Panc1 (cell line): ENCODE measurements at regions of chr2 and their contacts with region 1.

Region 1: GRCh38 chr2:170689481-170689880 is 25.7 kb upstream of the SP5 start:
- DNase-seq: no peak
- ATAC-seq: no peak
- H3K4me3 ChIP-seq: no peak overlapping the region
- H3K27ac ChIP-seq: no peak overlapping the region
- H3K4me1 ChIP-seq: no peaks in the 10 kb centered on the region
- H3K27me3 ChIP-seq: no peaks in the 10 kb centered on the region
- CTCF ChIP-seq: no peak

Region 2: DNA sequence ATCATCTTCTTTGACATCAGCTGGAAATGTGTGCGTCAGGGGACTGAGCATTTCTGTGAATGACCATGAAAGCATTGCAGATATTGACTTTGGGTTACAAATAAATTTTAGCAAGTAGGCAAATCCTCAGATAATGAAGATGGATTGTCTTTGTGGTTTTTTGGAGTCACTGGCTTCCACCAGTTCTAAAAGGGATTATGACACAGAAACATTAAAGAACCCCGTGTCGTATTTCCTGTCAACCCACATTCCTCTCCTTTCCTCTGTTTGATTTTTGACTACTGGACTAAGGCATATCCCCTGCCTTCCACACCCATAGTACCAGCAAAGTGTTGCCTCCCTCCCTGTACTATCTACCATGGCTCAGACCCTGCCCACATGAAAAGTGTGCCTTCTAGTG is 243.4 kb before region 1 on chr2:
- CTCF ChIA-PET with region 1: interaction called, 12 read pairs
- POLR2A ChIA-PET with region 1: no interaction called
- in situ Hi-C with region 1: no loop called
- intact Hi-C with region 1: no loop called
- DNase-seq: no peak
- ATAC-seq: no peak
- H3K4me3 ChIP-seq: no peak overlapping the region
- H3K27ac ChIP-seq: no peak overlapping the region
- H3K4me1 ChIP-seq: no peaks in the 10 kb centered on the region
- H3K27me3 ChIP-seq: no peaks in the 10 kb centered on the region; the same call in 1 of the 2 replicates
- CTCF ChIP-seq: no peak

Region 3: GRCh38 chr2:170713543-170714380 is 24.3 kb after region 1 on chr2:
- CTCF ChIA-PET with region 1: no interaction called
- POLR2A ChIA-PET with region 1: no interaction called
- in situ Hi-C with region 1: no loop called
- intact Hi-C with region 1: no loop called
- DNase-seq: no peak
- ATAC-seq: peak; percentile 29; the same call in 1 of the 2 replicates
- H3K4me3 ChIP-seq: peak overlapping the region; percentile 46 to 51
- H3K27ac ChIP-seq: no peak overlapping the region
- H3K4me1 ChIP-seq: peaks cover 12% of the 10 kb centered on the region
- H3K27me3 ChIP-seq: peaks cover 11% of the 10 kb centered on the region
- CTCF ChIP-seq: no peak